Activated CD4-positive, alpha-beta T cell treated with anti-CD3 and anti-CD28 coated beads for 36 hours (primary cell): ENCODE measurements at regions of chr2 and their contacts with region 1.

Region 1: GRCh38 chr2:159939946-159940345 is 122.5 kb downstream of the PLA2R1 start:
- DNase-seq: no peak
- ATAC-seq: no peak
- H3K4me3 Mint-ChIP-seq: no peak overlapping the region
- H3K27ac Mint-ChIP-seq: no peak overlapping the region
- H3K4me1 Mint-ChIP-seq: peaks cover 8% of the 10 kb centered on the region
- H3K27me3 Mint-ChIP-seq: peaks cover 2% of the 10 kb centered on the region

Region 2: DNA sequence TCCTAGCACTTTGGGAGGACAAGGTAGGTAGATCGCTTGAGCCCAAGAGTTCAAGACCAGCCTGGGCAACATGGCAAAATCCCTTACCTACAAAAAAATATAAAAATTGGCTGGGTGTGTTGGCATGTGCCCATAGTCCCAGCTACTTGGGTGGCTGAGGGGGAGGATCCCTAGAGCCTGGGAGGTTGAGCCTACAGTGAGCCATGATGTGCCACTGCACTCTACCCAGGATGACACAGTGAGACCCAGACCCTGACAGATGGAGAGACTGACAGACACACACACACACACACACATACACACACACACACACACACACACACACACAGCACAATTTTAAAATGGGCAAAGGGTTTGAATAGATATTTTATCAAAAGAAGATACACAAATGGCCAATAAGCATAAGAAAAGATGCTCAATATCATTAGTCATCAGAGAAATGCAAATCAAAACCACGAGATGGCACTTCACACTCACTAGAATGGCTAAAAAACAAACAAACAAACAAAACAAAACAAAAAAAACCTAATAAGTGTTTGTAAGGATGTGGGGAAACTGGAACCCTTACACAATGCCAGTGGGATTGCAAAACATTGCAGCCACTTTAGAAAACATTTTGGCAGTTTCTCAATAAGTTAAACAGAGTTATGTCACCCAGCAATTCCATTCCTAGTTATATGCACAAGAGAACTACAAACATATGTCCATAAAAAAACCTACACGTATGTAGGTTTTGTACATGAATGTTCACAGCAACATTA is 365.9 kb before region 1 on chr2:
- CTCF ChIA-PET with region 1: no interaction called
- POLR2A ChIA-PET with region 1: no interaction called
- intact Hi-C with region 1: no loop called
- DNase-seq: no peak
- ATAC-seq: no peak
- H3K4me3 Mint-ChIP-seq: no peak overlapping the region
- H3K27ac Mint-ChIP-seq: no peak overlapping the region
- H3K4me1 Mint-ChIP-seq: no peaks in the 10 kb centered on the region
- H3K27me3 Mint-ChIP-seq: no peaks in the 10 kb centered on the region

Region 3: DNA sequence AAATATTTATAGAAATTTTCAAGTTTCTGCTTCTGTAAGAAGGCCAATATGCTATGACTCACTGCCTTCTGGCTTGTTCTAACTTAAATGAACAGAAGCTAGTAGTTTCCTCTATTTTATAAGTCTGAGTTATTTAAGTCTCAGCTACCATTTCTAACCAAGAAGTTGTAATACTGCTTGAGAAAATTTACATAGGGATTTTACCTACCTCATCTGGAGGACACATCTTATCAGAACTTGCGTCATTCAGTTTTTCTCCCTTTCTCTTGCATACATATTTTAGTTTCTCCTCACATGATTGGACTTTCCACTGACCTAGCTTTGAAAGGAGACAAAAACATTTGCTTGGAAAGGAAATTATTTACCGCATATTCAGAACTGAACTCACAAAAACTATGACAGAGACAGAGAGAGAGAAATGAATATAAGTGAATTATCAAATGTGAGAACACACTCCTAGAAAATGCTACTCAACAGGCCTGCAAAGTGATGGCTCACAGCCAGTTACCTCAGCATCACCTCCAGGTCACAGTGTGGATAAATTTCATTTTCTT is 60.8 kb before region 1 on chr2:
- CTCF ChIA-PET with region 1: no interaction called
- POLR2A ChIA-PET with region 1: no interaction called
- intact Hi-C with region 1: no loop called
- DNase-seq: peak; percentile 74
- ATAC-seq: peak; percentile 87
- H3K4me3 Mint-ChIP-seq: no peak overlapping the region
- H3K27ac Mint-ChIP-seq: peak overlapping the region; percentile 76
- H3K4me1 Mint-ChIP-seq: peaks cover 62% of the 10 kb centered on the region
- H3K27me3 Mint-ChIP-seq: no peaks in the 10 kb centered on the region

Region 4: GRCh38 chr2:159960383-159960782 is 20.4 kb after region 1 on chr2:
- CTCF ChIA-PET with region 1: interaction called, 10 read pairs
- POLR2A ChIA-PET with region 1: no interaction called
- intact Hi-C with region 1: no loop called
- DNase-seq: no peak
- ATAC-seq: peak; percentile 96
- H3K4me3 Mint-ChIP-seq: peak overlapping the region; percentile 9
- H3K27ac Mint-ChIP-seq: peak overlapping the region; percentile 44
- H3K4me1 Mint-ChIP-seq: peaks cover 19% of the 10 kb centered on the region
- H3K27me3 Mint-ChIP-seq: peaks cover 5% of the 10 kb centered on the region